Adrenal gland (tissue), 19 donors: ENCODE measurements at regions of chr5 and their contacts with region 1.

Region 1: DNA sequence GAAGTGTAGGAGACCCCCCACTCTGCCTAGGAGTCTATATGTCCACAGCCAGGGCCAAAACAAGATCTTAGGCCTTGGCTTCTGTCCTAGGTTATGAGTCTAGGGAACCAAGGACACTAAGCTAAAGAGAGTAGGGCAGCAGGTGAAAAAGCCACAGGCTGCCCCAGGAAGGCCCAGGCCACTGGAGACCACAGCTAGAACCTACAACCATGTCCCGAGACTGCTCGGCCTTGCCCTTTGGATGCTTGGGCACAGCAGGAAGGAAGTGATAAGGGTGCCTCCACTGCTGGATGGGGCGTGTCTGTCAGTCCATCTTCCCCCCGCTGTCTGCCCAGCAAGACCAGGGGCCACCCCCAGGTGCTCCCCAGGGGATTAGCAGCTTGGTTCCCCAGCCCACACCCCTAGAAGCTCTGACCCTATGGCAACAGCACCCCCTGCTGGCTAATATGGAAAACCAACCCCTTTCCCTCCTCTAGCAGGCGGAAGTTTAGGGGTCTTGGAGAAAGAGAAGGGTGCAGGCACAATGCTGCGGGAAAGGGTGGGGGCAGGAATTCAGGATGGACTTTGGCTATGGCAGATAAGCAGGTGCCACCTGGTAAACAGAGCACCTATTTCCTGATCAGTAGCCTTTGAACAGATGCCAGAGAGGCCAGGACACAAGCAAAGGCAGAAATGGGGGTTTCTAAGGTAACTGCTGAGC is 10.5 kb upstream of the IRF1 start:
- DNase-seq: peak; percentile 43 to 73 (median 63)
- H3K4me3 ChIP-seq: no peak overlapping the region
- H3K27ac ChIP-seq: peak overlapping the region in 2 of 5 donors; percentile 26 to 60
- H3K4me1 ChIP-seq: peaks cover 5 to 17% of the 10 kb centered on the region in 2 donors
- H3K27me3 ChIP-seq: no peaks in the 10 kb centered on the region
- CTCF ChIP-seq: peak; percentile 73 to 96 (median 84)
- POLR2A ChIP-seq: no peak

Region 2: DNA sequence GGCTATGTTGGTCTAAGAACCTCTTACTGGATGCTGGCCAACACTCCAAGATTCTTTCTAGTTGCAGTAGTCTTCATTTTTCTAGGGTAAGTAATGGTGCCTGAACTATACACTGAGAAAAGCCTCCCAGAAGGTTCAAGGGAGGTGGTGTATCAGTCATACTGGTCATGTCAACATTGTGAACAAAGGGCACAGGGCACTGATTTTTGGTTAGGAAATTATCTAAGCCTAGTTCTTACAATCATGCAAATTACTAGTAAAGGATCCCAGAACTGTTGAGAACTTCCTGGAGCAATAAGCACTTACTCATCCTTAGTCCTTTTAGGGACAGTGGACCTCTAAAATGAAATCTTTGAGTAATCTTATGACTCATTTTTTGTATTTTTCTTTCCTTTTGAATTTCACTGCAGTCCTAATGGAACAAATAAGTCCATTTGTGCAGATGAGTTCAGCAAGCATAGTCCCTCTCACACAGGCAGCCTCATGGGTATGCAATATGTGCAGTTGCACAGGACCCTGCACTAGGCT is 1258.3 kb before region 1 on chr5:
- intact Hi-C with region 1: no loop called
- DNase-seq: no peak
- H3K4me3 ChIP-seq: no peak overlapping the region
- H3K27ac ChIP-seq: no peak overlapping the region
- H3K4me1 ChIP-seq: no peaks in the 10 kb centered on the region
- H3K27me3 ChIP-seq: no peaks in the 10 kb centered on the region
- CTCF ChIP-seq: no peak
- POLR2A ChIP-seq: no peak

Region 3: GRCh38 chr5:132272311-132273210 is 228.5 kb before region 1 on chr5:
- intact Hi-C with region 1: loop called (anchors 10 kb)
- DNase-seq: peak in 6 of 7 donors; percentile 51 to 82 (median 70)
- H3K4me3 ChIP-seq: peak overlapping the region in 1 of 4 donors; percentile 11
- H3K27ac ChIP-seq: no peak overlapping the region
- H3K4me1 ChIP-seq: no peaks in the 10 kb centered on the region
- H3K27me3 ChIP-seq: no peaks in the 10 kb centered on the region
- CTCF ChIP-seq: peak; percentile 60 to 88 (median 77)
- POLR2A ChIP-seq: no peak

Region 4: DNA sequence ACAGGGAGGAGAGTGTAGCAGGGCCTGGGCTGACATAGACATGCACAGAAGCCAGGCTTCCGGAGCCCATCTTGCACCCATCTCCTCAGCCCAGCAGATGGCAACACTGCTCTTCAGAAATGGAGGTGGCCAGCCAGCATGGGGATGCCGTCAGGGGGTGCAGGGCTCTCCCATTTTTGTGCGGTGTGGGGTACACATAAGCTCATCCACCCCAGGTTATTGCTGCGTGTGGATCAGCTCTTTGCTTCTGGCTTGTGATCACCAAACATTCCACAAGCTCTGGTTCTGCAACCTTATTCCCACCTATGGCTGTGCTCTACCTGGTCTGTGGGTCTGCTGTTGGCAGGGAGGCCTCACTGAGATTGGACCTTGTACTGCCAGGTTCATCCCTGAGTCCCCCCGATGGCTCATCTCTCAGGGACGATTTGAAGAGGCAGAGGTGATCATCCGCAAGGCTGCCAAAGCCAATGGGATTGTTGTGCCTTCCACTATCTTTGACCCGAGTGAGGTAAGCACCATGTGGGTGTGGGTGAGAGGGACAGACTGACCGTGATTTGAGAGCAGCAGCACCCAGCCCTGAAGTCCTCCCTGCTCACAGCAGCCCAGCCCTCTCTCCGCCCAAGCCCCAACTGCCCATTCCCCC is 114.3 kb before region 1 on chr5:
- intact Hi-C with region 1: loop called (anchors 2 to 5 kb)
- DNase-seq: peak; percentile 65 to 90 (median 78)
- H3K4me3 ChIP-seq: no peak overlapping the region
- H3K27ac ChIP-seq: peak overlapping the region in 3 of 5 donors; percentile 84 to 93 (median 89)
- H3K4me1 ChIP-seq: peaks cover 23 to 46% of the 10 kb centered on the region in 2 donors
- H3K27me3 ChIP-seq: no peaks in the 10 kb centered on the region
- CTCF ChIP-seq: peak; percentile 39 to 92 (median 80)
- POLR2A ChIP-seq: no peak

Region 5: GRCh38 chr5:132419502-132420468 is 81.3 kb before region 1 on chr5:
- intact Hi-C with region 1: loop called in 1 of 2 experiments (anchors 5 kb)
- DNase-seq: peak; percentile 59 to 86 (median 72)
- H3K4me3 ChIP-seq: no peak overlapping the region
- H3K27ac ChIP-seq: peak overlapping the region in 3 of 5 donors; percentile 11 to 71 (median 52)
- H3K4me1 ChIP-seq: peaks cover 32 to 77% of the 10 kb centered on the region in 2 donors
- H3K27me3 ChIP-seq: no peaks in the 10 kb centered on the region
- CTCF ChIP-seq: peak; percentile 86 to 94 (median 90)
- POLR2A ChIP-seq: no peak

Region 6: GRCh38 chr5:132437604-132438266 is 63.3 kb before region 1 on chr5:
- intact Hi-C with region 1: no loop called
- DNase-seq: peak in 6 of 7 donors; percentile 66 to 84 (median 70)
- H3K4me3 ChIP-seq: no peak overlapping the region
- H3K27ac ChIP-seq: peak overlapping the region in 3 of 5 donors; percentile 41 to 73 (median 68)
- H3K4me1 ChIP-seq: peaks cover 8 to 33% of the 10 kb centered on the region in 2 donors
- H3K27me3 ChIP-seq: no peaks in the 10 kb centered on the region
- CTCF ChIP-seq: no peak
- POLR2A ChIP-seq: no peak

Region 7: GRCh38 chr5:132639706-132640130 is 138.6 kb after region 1 on chr5:
- intact Hi-C with region 1: no loop called
- DNase-seq: no peak
- H3K4me3 ChIP-seq: no peak overlapping the region
- H3K27ac ChIP-seq: no peak overlapping the region
- H3K4me1 ChIP-seq: no peaks in the 10 kb centered on the region
- H3K27me3 ChIP-seq: no peaks in the 10 kb centered on the region
- CTCF ChIP-seq: no peak
- POLR2A ChIP-seq: no peak

Region 8: DNA sequence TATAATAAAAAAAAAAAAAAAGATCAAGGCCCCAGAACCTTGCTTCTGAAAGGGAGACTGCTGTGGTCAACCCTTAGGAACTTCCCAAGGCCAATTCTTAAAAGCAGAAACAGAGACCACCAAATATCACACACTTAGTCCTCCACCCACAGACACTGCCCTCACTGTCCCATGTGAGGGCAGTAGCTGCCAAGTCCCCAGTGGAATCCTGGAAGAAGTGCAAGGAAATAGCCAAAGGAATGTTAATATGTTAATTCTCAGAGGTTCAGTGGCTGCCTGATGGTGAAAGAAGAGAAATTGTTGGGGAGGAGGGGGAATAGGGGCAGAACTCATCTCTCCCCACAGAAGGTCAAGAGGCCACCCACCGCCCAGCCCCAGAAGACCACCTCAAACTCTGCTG is 1088.2 kb after region 1 on chr5:
- intact Hi-C with region 1: no loop called
- DNase-seq: no peak
- H3K4me3 ChIP-seq: no peak overlapping the region
- H3K27ac ChIP-seq: no peak overlapping the region
- H3K4me1 ChIP-seq: no peaks in the 10 kb centered on the region
- H3K27me3 ChIP-seq: no peaks in the 10 kb centered on the region
- CTCF ChIP-seq: peak in 2 of 6 experiments; percentile 18 to 19
- POLR2A ChIP-seq: no peak